ENCODE measurements at regions of chr2 and their contacts with region 1.

Region 1: DNA sequence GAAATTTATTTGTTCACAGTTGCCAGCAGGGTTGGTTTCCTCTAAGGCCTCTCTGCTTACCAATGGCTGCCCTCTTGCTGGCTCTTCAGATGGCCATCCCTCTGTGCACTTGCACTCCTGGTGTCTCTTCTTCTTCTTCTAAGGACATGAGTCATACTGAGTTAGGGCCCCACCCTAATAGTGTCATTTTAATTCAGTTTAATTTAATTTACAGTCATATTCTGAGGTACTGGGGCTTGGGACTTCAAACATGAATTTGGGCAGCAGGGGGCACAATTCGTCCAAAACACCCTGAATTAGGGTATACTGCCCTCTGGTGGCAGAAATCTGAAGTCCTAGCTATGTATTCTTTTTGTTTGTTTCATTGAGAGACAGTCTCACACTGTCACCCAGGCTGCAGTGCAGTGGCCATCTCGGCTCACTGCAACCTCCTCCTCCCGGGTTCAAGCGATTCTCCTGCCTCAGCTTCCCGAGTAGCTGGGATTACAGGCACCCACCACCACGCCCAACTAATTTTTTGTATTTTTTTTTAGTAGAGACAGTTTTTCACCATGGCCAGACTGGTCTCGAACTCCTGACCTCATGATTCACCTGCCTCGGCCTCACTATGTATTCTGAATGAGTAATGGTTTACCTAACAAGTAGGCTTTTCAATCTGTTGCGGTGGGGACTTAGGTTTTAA is 19.8 kb downstream of the SLC4A1AP start:
- DNase-seq: peak; percentile 69 to 94 (median 85)
- ATAC-seq: peak; percentile 92
- H3K4me3 ChIP-seq: no peak overlapping the region
- H3K4me3 Mint-ChIP-seq: peak overlapping the region; percentile 35
- H3K27ac ChIP-seq: peak overlapping the region in 1 of 2 experiments; percentile 58
- H3K27ac Mint-ChIP-seq: peak overlapping the region; percentile 66
- H3K4me1 ChIP-seq: peaks cover 3% of the 10 kb centered on the region
- H3K4me1 Mint-ChIP-seq: peaks cover 23% of the 10 kb centered on the region
- H3K27me3 ChIP-seq: no peaks in the 10 kb centered on the region
- H3K27me3 Mint-ChIP-seq: no peaks in the 10 kb centered on the region
- CTCF ChIP-seq: peak; percentile 100

Region 2: GRCh38 chr2:26964446-26965130 is 718.9 kb before region 1 on chr2:
- CTCF ChIA-PET with region 1: no interaction called
- POLR2A ChIA-PET with region 1: no interaction called
- intact Hi-C with region 1: loop called in 1 of 2 experiments (anchors 5 kb)
- DNase-seq: no peak
- ATAC-seq: no peak
- H3K4me3 ChIP-seq: no peak overlapping the region
- H3K4me3 Mint-ChIP-seq: no peak overlapping the region
- H3K27ac ChIP-seq: no peak overlapping the region
- H3K27ac Mint-ChIP-seq: no peak overlapping the region
- H3K4me1 ChIP-seq: no peaks in the 10 kb centered on the region
- H3K4me1 Mint-ChIP-seq: peaks cover 10% of the 10 kb centered on the region
- H3K27me3 ChIP-seq: no peaks in the 10 kb centered on the region
- H3K27me3 Mint-ChIP-seq: peaks cover 40% of the 10 kb centered on the region
- CTCF ChIP-seq: no peak

Region 3: GRCh38 chr2:27249891-27250651 is 433.5 kb before region 1 on chr2:
- CTCF ChIA-PET with region 1: no interaction called
- POLR2A ChIA-PET with region 1: no interaction called
- intact Hi-C with region 1: loop called in 1 of 2 experiments (anchors 5 kb)
- DNase-seq: peak in 8 of 9 experiments; percentile 18 to 65 (median 53)
- ATAC-seq: peak; percentile 79
- H3K4me3 ChIP-seq: no peak overlapping the region
- H3K4me3 Mint-ChIP-seq: no peak overlapping the region
- H3K27ac ChIP-seq: no peak overlapping the region
- H3K27ac Mint-ChIP-seq: no peak overlapping the region
- H3K4me1 ChIP-seq: peaks cover 4% of the 10 kb centered on the region
- H3K4me1 Mint-ChIP-seq: peaks cover 2% of the 10 kb centered on the region
- H3K27me3 ChIP-seq: peaks cover 0 to 3% of the 10 kb centered on the region in 2 experiments
- H3K27me3 Mint-ChIP-seq: peaks cover 15% of the 10 kb centered on the region
- CTCF ChIP-seq: peak; percentile 56

Region 4: DNA sequence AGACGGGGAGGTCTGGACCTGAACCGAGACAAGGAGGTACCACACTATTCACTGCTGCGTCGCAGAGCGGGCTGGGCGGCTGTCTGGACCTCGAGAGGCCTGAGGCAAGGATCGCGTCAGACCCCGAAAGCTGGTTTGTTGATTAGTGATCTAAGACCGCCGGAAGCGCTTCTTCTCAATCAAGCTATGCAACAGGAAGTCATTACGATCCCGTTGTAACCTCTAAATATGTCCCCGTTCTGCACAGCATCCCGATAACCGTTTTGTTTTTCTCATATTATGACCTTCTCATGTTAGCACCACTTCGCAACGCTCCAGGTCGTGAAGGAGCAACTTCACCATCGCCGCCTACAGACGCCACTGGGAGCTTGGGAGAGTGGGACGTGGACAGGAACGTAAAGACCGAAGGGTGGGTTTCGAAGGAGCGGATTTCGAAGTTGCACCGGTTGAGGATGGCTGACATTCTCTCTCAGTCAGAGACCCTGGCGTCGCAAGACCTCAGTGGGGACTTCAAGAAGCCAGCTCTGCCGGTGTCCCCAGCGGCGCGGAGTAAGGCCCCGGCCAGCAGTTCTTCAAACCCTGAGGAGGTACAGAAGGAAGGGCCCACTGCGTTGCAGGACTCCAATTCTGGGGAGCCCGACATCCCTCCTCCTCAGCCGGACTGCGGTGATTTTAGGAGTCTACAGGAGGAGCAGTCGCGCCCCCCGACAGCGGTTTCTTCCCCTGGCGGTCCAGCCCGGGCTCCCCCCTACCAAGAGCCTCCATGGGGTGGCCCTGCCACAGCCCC is 19.9 kb before region 1 on chr2 and contains the starts of genes SLC4A1AP and SUPT7L:
- CTCF ChIA-PET with region 1: interaction called, 49 read pairs
- POLR2A ChIA-PET with region 1: interaction called, 4 read pairs
- intact Hi-C with region 1: loop called in 1 of 2 experiments (anchors 2 kb)
- DNase-seq: peak; percentile 54 to 90 (median 74)
- ATAC-seq: peak; percentile 81
- H3K4me3 ChIP-seq: peak within 1 kb of the TSS; percentile 96 to 99
- H3K4me3 Mint-ChIP-seq: peak within 1 kb of the TSS; percentile 100
- H3K27ac ChIP-seq: peak within 1 kb of the TSS; percentile 95 to 98
- H3K27ac Mint-ChIP-seq: peak within 1 kb of the TSS; percentile 100
- H3K4me1 ChIP-seq: peaks cover 28% of the 10 kb centered on the region
- H3K4me1 Mint-ChIP-seq: peaks cover 60% of the 10 kb centered on the region
- H3K27me3 ChIP-seq: no peaks in the 10 kb centered on the region
- H3K27me3 Mint-ChIP-seq: no peaks in the 10 kb centered on the region
- CTCF ChIP-seq: no peak
- total RNA-seq, gene SLC4A1AP: 21.4 to 22.8 TPM
- total RNA-seq, gene SUPT7L: 54.0 to 55.5 TPM

Region 5: GRCh38 chr2:27703638-27704341 is 20.3 kb after region 1 on chr2:
- CTCF ChIA-PET with region 1: interaction called, 14 read pairs
- POLR2A ChIA-PET with region 1: interaction called, 4 read pairs
- intact Hi-C with region 1: no loop called
- DNase-seq: peak; percentile 73 to 90 (median 84)
- ATAC-seq: peak; percentile 84
- H3K4me3 ChIP-seq: no peak overlapping the region
- H3K4me3 Mint-ChIP-seq: no peak overlapping the region
- H3K27ac ChIP-seq: no peak overlapping the region
- H3K27ac Mint-ChIP-seq: no peak overlapping the region
- H3K4me1 ChIP-seq: no peaks in the 10 kb centered on the region
- H3K4me1 Mint-ChIP-seq: peaks cover 3% of the 10 kb centered on the region
- H3K27me3 ChIP-seq: no peaks in the 10 kb centered on the region
- H3K27me3 Mint-ChIP-seq: no peaks in the 10 kb centered on the region
- CTCF ChIP-seq: peak; percentile 84

Region 6: DNA sequence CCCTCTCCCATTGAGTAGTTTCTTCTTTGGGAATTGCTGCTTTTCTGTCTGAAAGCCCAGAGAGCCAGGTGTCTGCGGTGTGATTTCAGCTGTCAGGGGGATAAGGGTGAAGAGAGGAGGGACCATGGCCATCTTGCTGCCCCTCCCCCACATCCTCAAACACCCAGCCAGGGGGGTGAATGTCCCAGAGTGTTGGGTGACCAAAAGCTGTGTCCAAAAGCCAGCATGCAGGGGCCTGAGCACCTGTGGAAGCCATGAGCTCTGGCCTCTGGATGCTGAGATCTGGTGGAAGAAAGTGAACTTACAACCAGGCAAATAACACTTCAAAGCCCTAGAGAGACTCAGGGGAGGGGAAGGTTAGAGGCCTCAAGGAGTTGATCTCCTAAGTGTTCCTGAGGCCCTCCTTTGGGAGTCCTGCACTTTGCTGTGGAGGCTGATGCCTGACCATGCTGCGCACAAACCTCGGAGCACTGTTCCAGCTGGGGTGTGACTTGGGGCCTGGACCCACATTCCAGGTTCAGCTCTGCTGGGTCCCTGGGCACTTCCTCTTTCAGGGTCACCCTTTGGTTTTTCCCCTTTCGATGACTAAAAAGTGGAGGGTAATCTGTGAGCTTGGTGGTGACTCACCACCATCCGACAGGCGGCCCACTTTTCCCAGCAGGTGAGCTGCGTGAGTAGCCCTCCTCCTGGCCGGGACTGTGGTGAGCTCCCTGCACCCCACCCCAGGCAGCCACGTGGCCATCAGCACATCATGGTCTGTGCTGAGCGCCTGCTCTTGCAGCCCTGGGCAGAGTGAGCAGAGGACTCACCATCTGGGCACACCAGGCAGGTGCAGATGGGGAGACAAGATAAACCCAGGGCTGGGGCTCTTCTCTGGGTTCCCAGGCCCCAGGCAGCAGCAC is 642.3 kb after region 1 on chr2:
- CTCF ChIA-PET with region 1: no interaction called
- POLR2A ChIA-PET with region 1: no interaction called
- intact Hi-C with region 1: no loop called
- DNase-seq: peak in 1 of 9 experiments; percentile 27
- ATAC-seq: no peak
- H3K4me3 ChIP-seq: no peak overlapping the region
- H3K4me3 Mint-ChIP-seq: no peak overlapping the region
- H3K27ac ChIP-seq: no peak overlapping the region
- H3K27ac Mint-ChIP-seq: no peak overlapping the region
- H3K4me1 ChIP-seq: no peaks in the 10 kb centered on the region
- H3K4me1 Mint-ChIP-seq: no peaks in the 10 kb centered on the region
- H3K27me3 ChIP-seq: no peaks in the 10 kb centered on the region
- H3K27me3 Mint-ChIP-seq: no peaks in the 10 kb centered on the region
- CTCF ChIP-seq: no peak